ENCODE measurements at regions of chr4 and their contacts with region 1.

Region 1: GRCh38 chr4:159102622-159103383 is at the start of gene RAPGEF2:
- DNase-seq: peak; percentile 94
- ATAC-seq: peak; percentile 87
- H3K4me3 ChIP-seq: peak within 1 kb of the TSS; percentile 28 to 89 (median 81)
- H3K4me3 Mint-ChIP-seq: peak within 1 kb of the TSS; percentile 86
- H3K27ac ChIP-seq: peak within 1 kb of the TSS; percentile 78 to 85
- H3K27ac Mint-ChIP-seq: peak within 1 kb of the TSS; percentile 93
- H3K4me1 ChIP-seq: peaks cover 26 to 30% of the 10 kb centered on the region in 2 donors
- H3K4me1 Mint-ChIP-seq: peaks cover 41% of the 10 kb centered on the region
- H3K27me3 ChIP-seq: peaks cover 0 to 11% (median 0%) of the 10 kb centered on the region in 4 experiments
- H3K27me3 Mint-ChIP-seq: peaks cover 8% of the 10 kb centered on the region
- CTCF ChIP-seq: no peak
- total RNA-seq, gene RAPGEF2: 42.9 and 45.8 TPM in 2 replicates

Region 2: DNA sequence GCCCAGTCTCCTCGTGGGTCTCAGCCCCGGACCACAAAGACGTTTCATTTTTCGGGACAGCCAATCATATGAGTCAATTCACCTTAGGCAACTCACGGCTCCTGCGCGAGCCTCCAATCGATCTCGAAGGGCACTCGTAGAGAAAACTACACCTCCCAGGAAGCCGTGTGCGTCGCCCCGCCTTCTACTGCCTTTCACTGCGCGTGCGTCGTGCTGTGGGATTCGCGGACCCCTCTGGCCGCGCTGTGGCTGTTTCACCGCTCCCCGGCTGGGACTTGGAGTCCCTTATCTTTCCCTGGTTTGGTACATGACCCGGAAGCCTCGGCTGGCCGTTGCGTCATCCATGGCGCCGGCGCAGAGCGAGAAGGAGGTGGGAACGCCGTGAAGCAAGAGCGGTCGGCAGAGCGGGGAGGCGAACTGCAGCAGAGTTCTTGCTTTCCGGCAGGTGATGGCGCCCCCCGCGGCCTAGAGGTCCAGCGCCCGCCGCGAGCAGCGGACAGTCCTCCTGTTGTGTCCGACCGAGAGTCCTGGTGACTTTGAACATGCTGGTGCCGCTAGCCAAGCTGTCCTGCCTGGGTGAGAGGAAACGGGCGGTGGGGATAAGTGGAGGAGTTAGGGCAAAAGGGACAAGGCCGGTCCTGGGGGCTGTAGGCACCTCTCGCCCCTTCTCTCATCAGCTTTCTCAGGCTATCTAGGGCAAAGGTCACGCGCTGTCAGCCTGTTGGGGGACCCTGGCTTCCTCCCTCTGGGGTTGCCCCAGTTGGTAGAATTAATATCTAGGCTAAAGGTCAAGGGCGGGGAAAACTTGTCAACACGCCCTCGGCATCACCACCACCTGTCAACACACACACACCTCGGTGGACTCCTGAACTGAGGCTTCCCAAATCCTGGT is 430.6 kb before region 1 on chr4 and contains the start of gene ETFDH:
- CTCF ChIA-PET with region 1: no interaction called
- POLR2A ChIA-PET with region 1: no interaction called
- intact Hi-C with region 1: loop called (anchors 1 kb)
- DNase-seq: peak; percentile 100
- ATAC-seq: peak; percentile 80
- H3K4me3 ChIP-seq: peak within 1 kb of the TSS; percentile 73 to 96 (median 77)
- H3K4me3 Mint-ChIP-seq: peak within 1 kb of the TSS; percentile 90
- H3K27ac ChIP-seq: peak within 1 kb of the TSS; percentile 93 to 97
- H3K27ac Mint-ChIP-seq: peak within 1 kb of the TSS; percentile 95
- H3K4me1 ChIP-seq: peaks cover 12 to 13% of the 10 kb centered on the region in 2 donors
- H3K4me1 Mint-ChIP-seq: peaks cover 22% of the 10 kb centered on the region
- H3K27me3 ChIP-seq: no peaks in the 10 kb centered on the region
- H3K27me3 Mint-ChIP-seq: no peaks in the 10 kb centered on the region
- CTCF ChIP-seq: peak; percentile 68
- total RNA-seq, gene ETFDH: 8.8 and 10.8 TPM in 2 replicates

Region 3: GRCh38 chr4:158722917-158723793 is 379.6 kb before region 1 on chr4 and contains the start of gene PPID:
- CTCF ChIA-PET with region 1: no interaction called
- POLR2A ChIA-PET with region 1: no interaction called
- intact Hi-C with region 1: loop called (anchors 2 kb)
- DNase-seq: peak; percentile 89
- ATAC-seq: peak; percentile 89
- H3K4me3 ChIP-seq: peak within 1 kb of the TSS; percentile 76 to 92 (median 88)
- H3K4me3 Mint-ChIP-seq: peak within 1 kb of the TSS; percentile 97
- H3K27ac ChIP-seq: peak within 1 kb of the TSS; percentile 71 to 87
- H3K27ac Mint-ChIP-seq: peak within 1 kb of the TSS; percentile 89
- H3K4me1 ChIP-seq: peaks cover 7 to 12% of the 10 kb centered on the region in 2 donors
- H3K4me1 Mint-ChIP-seq: peaks cover 20% of the 10 kb centered on the region
- H3K27me3 ChIP-seq: peaks cover 0 to 6% (median 4%) of the 10 kb centered on the region in 4 experiments
- H3K27me3 Mint-ChIP-seq: peaks cover 16% of the 10 kb centered on the region
- CTCF ChIP-seq: no peak
- total RNA-seq, gene PPID: 18.7 and 23.7 TPM in 2 replicates

Region 4: GRCh38 chr4:159051245-159052071 is 51.3 kb before region 1 on chr4:
- CTCF ChIA-PET with region 1: interaction called, 4 read pairs
- POLR2A ChIA-PET with region 1: interaction called, 3 read pairs
- intact Hi-C with region 1: loop called (anchors 2 kb)
- DNase-seq: peak; percentile 32
- ATAC-seq: peak; percentile 35
- H3K4me3 ChIP-seq: peak overlapping the region in 2 of 5 experiments; percentile 1 to 40
- H3K4me3 Mint-ChIP-seq: peak overlapping the region; percentile 74
- H3K27ac ChIP-seq: no peak overlapping the region
- H3K27ac Mint-ChIP-seq: peak overlapping the region; percentile 10
- H3K4me1 ChIP-seq: peaks cover 16% of the 10 kb centered on the region in 2 donors
- H3K4me1 Mint-ChIP-seq: peaks cover 17% of the 10 kb centered on the region
- H3K27me3 ChIP-seq: peaks cover 0 to 24% (median 16%) of the 10 kb centered on the region in 4 experiments
- H3K27me3 Mint-ChIP-seq: peaks cover 57% of the 10 kb centered on the region
- CTCF ChIP-seq: no peak

Region 5: DNA sequence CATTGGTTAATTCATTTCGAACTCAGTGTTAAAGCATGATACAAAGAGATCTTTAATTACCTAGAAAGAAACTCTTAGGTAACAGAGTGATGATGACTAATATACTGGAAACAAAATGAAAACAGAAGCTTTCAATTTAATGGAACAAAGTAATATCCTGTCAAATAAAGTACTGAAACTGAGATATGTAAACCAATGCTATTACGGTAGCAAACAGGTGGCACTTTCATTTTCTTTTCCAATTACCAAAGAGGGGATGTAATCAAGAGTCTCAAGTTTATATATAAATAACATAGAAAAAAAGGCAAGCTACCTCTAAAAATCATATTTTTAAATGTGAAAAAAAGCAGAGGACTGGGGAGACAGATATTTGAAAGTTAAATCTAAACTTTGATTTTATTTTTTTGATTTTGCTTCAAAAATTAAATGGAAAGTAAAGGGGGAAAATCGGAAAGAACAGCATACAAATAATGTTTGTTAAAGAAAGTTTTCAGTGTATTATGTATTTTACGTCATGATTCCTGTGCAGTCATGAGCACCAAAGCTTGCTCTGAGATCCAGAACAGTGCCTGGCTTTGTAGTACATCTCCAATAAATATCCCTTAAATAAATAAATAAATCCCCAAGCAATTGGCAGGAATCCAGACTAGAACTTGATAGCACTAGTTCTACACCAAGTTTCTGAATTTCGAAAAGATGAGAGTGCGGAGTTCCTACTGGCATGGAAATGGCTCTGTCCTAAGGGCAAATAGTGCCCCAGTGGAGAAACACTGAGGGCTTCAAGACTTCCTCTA is 24.9 kb before region 1 on chr4:
- CTCF ChIA-PET with region 1: no interaction called
- POLR2A ChIA-PET with region 1: no interaction called
- intact Hi-C with region 1: loop called (anchors 1 kb)
- DNase-seq: peak; percentile 70
- ATAC-seq: peak; percentile 79
- H3K4me3 ChIP-seq: peak overlapping the region in 4 of 5 experiments; percentile 2 to 52 (median 20)
- H3K4me3 Mint-ChIP-seq: peak overlapping the region; percentile 30
- H3K27ac ChIP-seq: peak overlapping the region; percentile 43 to 58
- H3K27ac Mint-ChIP-seq: peak overlapping the region; percentile 63
- H3K4me1 ChIP-seq: peaks cover 13 to 14% of the 10 kb centered on the region in 2 donors
- H3K4me1 Mint-ChIP-seq: peaks cover 13% of the 10 kb centered on the region
- H3K27me3 ChIP-seq: peaks cover 0 to 2% (median 0%) of the 10 kb centered on the region in 4 experiments
- H3K27me3 Mint-ChIP-seq: no peaks in the 10 kb centered on the region
- CTCF ChIP-seq: no peak

Region 6: GRCh38 chr4:159483782-159484767 is 381.3 kb after region 1 on chr4:
- CTCF ChIA-PET with region 1: no interaction called
- POLR2A ChIA-PET with region 1: no interaction called
- intact Hi-C with region 1: no loop called
- DNase-seq: no peak
- ATAC-seq: no peak
- H3K4me3 ChIP-seq: no peak overlapping the region
- H3K4me3 Mint-ChIP-seq: no peak overlapping the region
- H3K27ac ChIP-seq: no peak overlapping the region
- H3K27ac Mint-ChIP-seq: no peak overlapping the region
- H3K4me1 ChIP-seq: no peaks in the 10 kb centered on the region
- H3K4me1 Mint-ChIP-seq: no peaks in the 10 kb centered on the region
- H3K27me3 ChIP-seq: peaks cover 0 to 4% (median 0%) of the 10 kb centered on the region in 4 experiments
- H3K27me3 Mint-ChIP-seq: peaks cover 4% of the 10 kb centered on the region
- CTCF ChIP-seq: no peak